ENCODE measurements at regions of chr7 and their contacts with region 1.

Region 1: GRCh38 chr7:44748045-44748947 is at the start of gene ZMIZ2:
- DNase-seq: peak; percentile 98
- H3K4me3 Mint-ChIP-seq: peak within 1 kb of the TSS; percentile 95
- H3K27ac Mint-ChIP-seq: peak within 1 kb of the TSS; percentile 93
- H3K4me1 Mint-ChIP-seq: peaks cover 51% of the 10 kb centered on the region
- H3K27me3 Mint-ChIP-seq: no peaks in the 10 kb centered on the region
- CTCF ChIP-seq: no peak
- total RNA-seq, gene ZMIZ2: 260 and 269 TPM in 2 replicates

Region 2: GRCh38 chr7:44638611-44639557 is 109.4 kb before region 1 on chr7:
- CTCF ChIA-PET with region 1: interaction called, 5 read pairs
- intact Hi-C with region 1: loop called (anchors 2 kb)
- DNase-seq: peak; percentile 97
- H3K4me3 Mint-ChIP-seq: peak overlapping the region; percentile 33
- H3K27ac Mint-ChIP-seq: peak overlapping the region; percentile 94
- H3K4me1 Mint-ChIP-seq: peaks cover 67% of the 10 kb centered on the region
- H3K27me3 Mint-ChIP-seq: no peaks in the 10 kb centered on the region
- CTCF ChIP-seq: no peak

Region 3: GRCh38 chr7:44738051-44738723 is 10.1 kb before region 1 on chr7:
- CTCF ChIA-PET with region 1: interaction called, 10 read pairs
- intact Hi-C with region 1: no loop called
- DNase-seq: no peak
- H3K4me3 Mint-ChIP-seq: no peak overlapping the region
- H3K27ac Mint-ChIP-seq: no peak overlapping the region
- H3K4me1 Mint-ChIP-seq: peaks cover 38% of the 10 kb centered on the region
- H3K27me3 Mint-ChIP-seq: no peaks in the 10 kb centered on the region
- CTCF ChIP-seq: no peak

Region 4: DNA sequence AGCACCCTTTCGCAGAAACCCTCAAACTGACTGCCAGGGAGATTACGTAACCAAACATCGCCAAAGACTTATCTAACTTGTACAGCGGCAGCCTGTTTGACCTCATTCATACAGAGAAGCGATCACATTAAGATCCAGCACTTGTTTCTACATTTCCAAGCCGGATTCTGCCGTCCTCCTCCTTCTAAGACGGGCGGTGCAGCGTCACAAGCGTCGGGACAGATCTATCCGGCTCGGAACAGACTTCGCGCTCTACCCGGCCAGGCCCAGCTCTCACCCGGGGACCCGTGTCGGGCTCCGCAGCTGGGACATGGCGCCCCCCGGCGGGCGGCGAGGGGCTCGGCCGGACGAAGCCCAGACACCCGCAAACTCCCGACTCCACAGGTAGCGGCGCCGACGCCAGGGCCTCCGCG is 99.2 kb after region 1 on chr7:
- CTCF ChIA-PET with region 1: interaction called, 5 read pairs
- intact Hi-C with region 1: loop called (anchors 5 kb)
- DNase-seq: peak; percentile 96
- H3K4me3 Mint-ChIP-seq: peak overlapping the region; percentile 82
- H3K27ac Mint-ChIP-seq: peak overlapping the region; percentile 98
- H3K4me1 Mint-ChIP-seq: peaks cover 30% of the 10 kb centered on the region
- H3K27me3 Mint-ChIP-seq: no peaks in the 10 kb centered on the region
- CTCF ChIP-seq: peak; percentile 97

Region 5: DNA sequence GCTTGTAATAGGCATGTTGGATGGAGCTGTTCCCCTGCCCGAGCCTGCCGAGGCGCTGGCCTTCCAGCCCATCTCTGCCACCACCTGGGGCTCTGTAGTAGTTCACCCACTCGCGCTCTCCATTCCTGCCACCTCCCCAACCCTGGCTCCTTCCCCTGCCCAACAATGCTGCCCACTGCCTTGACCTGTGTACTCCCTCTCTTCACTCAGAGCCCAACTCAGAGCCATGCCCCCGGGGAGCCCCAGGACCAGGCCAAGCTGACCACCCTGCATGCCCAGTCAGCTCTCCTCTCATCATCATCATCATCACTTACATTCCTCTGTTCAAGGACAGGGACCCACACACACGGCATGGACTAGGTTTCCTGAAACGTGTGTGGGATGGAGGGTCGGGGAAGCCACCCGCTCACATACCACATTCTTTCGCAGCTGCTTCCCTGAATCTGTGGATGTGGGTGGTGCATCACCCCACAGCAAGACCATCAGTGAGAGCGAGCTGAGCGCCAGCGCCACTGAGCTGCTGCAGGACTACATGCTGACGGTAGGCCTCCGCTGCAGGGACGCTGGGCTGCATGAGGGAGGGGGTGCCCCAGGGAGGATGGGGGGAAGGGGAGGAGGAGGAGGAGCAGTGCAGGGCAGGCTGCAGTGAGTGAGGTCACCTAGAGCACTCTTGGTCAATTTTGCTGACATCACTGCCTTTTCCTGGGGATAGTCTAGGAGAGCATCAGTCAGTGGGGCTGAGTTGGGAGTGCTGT is 324.9 kb after region 1 on chr7:
- CTCF ChIA-PET with region 1: no interaction called
- intact Hi-C with region 1: no loop called
- DNase-seq: no peak
- H3K4me3 Mint-ChIP-seq: no peak overlapping the region
- H3K27ac Mint-ChIP-seq: no peak overlapping the region
- H3K4me1 Mint-ChIP-seq: peaks cover 14% of the 10 kb centered on the region
- H3K27me3 Mint-ChIP-seq: no peaks in the 10 kb centered on the region
- CTCF ChIP-seq: no peak

Measured in Calu3 (cell line).